Dorsolateral prefrontal cortex (tissue), 120 donors: ENCODE measurements at regions of chr4 and their contacts with region 1.

Region 1: GRCh38 chr4:15479089-15479912 is 9.6 kb downstream of the CC2D2A start:
- DNase-seq: peak; percentile 28 to 70 (median 60)
- H3K4me3 ChIP-seq: peak overlapping the region; percentile 51 to 94 (median 67)
- H3K27ac ChIP-seq: peak overlapping the region; percentile 57 to 96 (median 89)
- H3K27me3 ChIP-seq: no peaks in the 10 kb centered on the region
- CTCF ChIP-seq: peak; percentile 24 to 90 (median 83)

Region 2: GRCh38 chr4:14877246-14878225 is 601.8 kb before region 1 on chr4:
- intact Hi-C with region 1: no loop called
- DNase-seq: no peak
- H3K4me3 ChIP-seq: no peak overlapping the region
- H3K27ac ChIP-seq: peak overlapping the region in 17 of 59 donors; percentile 3 to 63 (median 36)
- H3K27me3 ChIP-seq: no peaks in the 10 kb centered on the region
- CTCF ChIP-seq: no peak

Region 3: DNA sequence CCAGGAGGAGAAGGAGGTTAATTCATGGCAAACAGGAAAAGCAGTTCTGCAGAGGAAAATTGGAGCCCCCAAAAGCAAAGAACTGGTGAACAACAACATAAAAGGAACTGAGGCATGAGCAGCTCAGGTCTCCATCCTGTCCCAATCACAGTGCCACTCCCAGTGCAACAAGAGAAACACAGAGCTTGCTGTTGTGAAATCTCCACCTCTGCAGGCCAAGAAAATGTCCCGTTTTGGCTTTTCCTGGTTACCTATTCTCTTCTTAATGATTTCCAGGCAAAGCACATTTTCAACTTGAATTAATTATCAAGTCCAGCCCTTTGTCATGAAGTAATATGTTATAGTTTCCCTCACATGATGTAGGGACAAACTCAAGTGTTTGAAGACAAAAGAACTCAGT is 50.7 kb before region 1 on chr4:
- intact Hi-C with region 1: no loop called
- DNase-seq: no peak
- H3K4me3 ChIP-seq: peak overlapping the region in 1 of 59 donors; percentile 2
- H3K27ac ChIP-seq: peak overlapping the region in 21 of 59 donors; percentile 0 to 62 (median 23)
- H3K27me3 ChIP-seq: no peaks in the 10 kb centered on the region
- CTCF ChIP-seq: no peak

Region 4: GRCh38 chr4:15649914-15650545 is 170.7 kb after region 1 on chr4:
- intact Hi-C with region 1: loop called (anchors 1 to 2 kb)
- DNase-seq: peak in 3 of 10 donors; percentile 31 to 36 (median 33)
- H3K4me3 ChIP-seq: peak overlapping the region in 19 of 59 donors; percentile 0 to 34 (median 9)
- H3K27ac ChIP-seq: peak overlapping the region in 45 of 59 donors; percentile 0 to 100 (median 48)
- H3K27me3 ChIP-seq: no peaks in the 10 kb centered on the region
- CTCF ChIP-seq: peak; percentile 42 to 87 (median 72)

Region 5: DNA sequence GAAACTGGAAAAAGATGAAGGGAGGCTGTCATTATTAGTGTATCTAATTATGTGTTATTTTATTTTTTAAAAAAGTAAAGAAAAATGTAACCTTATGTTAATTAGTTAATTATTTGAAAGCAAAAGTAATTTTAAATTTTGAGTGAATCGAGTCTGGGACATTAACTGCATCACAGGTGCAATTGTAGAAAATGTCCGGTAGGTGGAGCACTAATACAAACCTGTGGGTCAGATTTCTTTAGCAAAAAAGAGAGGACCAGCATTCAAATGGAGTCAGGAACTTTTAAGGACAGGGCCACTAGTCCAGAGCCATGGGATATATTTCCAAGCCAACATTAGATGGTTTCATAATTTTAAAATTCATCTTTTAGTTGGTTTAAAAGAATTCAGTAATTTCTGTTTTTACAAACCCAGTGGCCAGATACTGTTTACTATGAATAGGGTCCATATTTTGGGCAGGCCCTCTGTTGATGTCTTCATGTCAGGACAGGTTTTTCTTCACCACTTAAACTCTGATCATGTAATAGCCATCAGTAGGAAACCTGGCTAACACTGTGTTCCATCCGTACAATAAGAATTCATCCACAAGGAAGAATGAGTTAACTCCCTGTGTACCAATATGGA is 250.7 kb after region 1 on chr4:
- intact Hi-C with region 1: loop called in 1 of 2 experiments (anchors 2 kb)
- DNase-seq: peak in 1 of 10 donors; percentile 6
- H3K4me3 ChIP-seq: no peak overlapping the region
- H3K27ac ChIP-seq: no peak overlapping the region
- H3K27me3 ChIP-seq: no peaks in the 10 kb centered on the region
- CTCF ChIP-seq: peak; percentile 78 to 99 (median 90)

Region 6: DNA sequence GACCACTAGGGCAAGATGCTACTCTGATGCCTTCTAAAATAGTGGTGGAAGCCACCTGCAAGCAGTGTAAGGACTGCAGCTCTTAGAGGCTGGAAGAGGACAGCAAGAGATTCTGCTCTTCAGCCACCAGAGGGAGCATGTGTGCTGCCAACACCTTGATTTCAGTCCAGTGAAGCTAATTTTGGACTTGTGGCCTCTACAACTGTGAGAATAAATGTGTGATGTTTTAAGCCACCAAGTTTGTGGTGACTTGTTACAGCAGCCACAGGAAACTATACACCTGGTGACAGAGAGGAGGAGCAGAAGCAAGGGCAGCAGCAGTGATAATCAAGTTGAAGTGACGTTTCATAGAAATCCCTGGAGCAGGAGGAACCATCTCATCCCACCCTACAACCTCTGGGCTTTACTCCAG is 403.4 kb after region 1 on chr4:
- intact Hi-C with region 1: loop called in 1 of 2 experiments (anchors 5 kb)
- DNase-seq: peak in 4 of 10 donors; percentile 20 to 58 (median 22)
- H3K4me3 ChIP-seq: no peak overlapping the region
- H3K27ac ChIP-seq: no peak overlapping the region
- H3K27me3 ChIP-seq: peaks cover 0 to 4% (median 0%) of the 10 kb centered on the region in 45 donors
- CTCF ChIP-seq: peak; percentile 67 to 94 (median 87)

Region 7: DNA sequence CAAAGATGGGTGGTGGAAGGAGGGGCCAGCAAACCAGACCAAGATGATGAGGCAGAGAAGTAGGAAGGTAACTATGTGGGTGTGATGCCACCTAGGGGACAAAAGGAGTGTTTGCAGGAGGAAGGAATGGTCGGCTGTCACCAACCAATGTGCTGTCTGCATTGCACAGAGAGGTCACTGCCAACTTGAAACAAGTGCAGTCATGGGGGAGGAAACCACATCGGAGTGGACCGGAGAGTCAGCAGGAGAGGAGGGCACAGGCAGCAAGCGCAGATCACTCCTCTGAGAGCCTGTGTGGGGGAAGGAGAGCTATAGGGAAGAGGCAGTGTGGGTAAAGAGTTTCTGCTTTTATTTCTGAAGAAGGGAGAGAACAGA is 522.2 kb after region 1 on chr4:
- intact Hi-C with region 1: loop called (anchors 5 to 10 kb)
- DNase-seq: peak in 9 of 10 donors; percentile 44 to 74 (median 64)
- H3K4me3 ChIP-seq: peak overlapping the region in 4 of 59 donors; percentile 8 to 43 (median 13)
- H3K27ac ChIP-seq: no peak overlapping the region
- H3K27me3 ChIP-seq: no peaks in the 10 kb centered on the region
- CTCF ChIP-seq: peak; percentile 57 to 94 (median 84)